ENCODE measurements at regions of chr12 and their contacts with region 1.

Region 1: DNA sequence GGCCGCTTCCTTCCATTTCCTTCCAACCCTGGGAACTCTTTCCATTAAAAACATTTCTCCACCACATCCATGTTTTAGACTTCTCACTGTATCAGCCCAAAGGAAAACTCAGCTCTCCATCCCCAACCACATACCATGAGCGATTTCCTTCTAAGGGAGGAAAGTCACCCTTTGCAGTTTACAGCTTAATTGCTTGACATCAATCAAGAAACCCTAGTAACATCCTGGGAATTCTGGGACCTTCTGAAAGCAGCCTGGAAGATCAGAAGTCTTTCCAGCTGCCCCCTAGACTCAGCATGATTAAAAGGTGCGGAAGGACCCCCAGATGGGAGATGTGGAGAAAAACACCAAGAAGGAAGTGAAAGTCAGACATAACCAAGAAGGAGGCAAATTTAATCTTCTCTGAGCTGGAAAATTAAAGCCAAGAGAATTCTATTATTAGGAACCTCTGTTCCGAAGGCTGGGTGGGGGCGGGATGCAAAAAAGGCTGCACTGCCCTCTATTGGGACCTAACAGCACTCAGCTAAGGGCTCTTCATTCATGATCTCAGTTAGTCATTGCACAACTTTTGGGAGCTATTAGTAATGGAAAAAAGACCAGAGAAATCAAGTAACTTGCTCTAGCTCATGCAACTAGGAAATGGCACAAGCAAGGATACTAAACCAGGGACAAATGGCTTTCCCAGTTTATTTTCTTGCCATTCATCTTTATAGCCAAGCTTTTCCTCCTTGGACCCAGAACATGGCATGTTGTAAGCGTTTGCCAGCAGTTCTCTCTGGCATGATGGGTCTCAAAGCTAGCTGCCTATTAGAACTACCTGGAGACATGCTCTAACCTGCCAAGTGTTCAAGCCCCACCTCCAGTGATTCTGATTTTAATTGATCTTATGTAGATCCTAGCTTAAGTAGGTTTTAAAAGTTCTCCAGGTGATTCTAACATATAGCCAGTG is 73.1 kb upstream of the PLXNC1 start:
- DNase-seq: peak; percentile 79
- H3K4me3 ChIP-seq: no peak overlapping the region
- H3K27ac ChIP-seq: no peak overlapping the region
- H3K4me1 ChIP-seq: peaks cover 4% of the 10 kb centered on the region
- H3K27me3 ChIP-seq: peaks cover 5% of the 10 kb centered on the region
- CTCF ChIP-seq: peak; percentile 81 to 84

Region 2: DNA sequence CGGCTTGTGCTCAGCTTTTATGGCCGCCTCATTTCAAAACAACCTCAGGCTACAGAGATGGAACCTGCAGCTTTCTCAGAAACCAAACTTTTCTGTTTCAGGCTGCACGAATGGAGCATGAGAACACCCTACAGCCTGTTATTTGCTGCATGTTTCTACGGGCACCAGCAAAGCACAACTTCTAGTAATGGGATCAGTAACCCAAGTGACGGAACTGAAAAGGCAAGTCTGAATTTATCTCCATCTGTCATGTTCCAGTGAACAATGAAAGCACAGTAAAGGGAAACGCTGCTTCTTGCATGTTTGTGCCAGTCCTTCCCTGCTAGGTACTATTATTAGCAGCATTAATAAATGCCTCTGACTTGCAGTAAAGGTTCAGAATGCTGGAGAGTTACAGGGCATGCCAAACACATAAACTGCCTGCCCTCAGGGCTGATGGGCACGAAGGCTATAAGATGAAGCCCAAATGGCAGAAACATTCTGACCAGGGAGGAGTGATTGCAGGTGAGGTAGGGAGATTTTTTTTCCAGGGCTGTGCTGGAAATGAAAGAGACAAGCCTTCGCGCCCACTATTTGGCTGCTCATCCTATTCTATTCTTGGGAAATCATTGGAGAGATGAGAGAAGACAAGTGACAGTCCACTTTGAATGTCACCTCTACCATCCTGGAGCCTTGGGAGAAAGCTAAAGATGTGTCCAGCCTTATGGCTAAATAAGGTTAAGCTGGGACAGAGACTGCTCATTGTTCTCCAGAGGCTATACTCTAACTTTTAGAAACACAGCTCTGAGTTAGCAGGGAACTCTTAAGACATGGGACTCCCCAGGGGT is 27.3 kb before region 1 on chr12:
- CTCF ChIA-PET with region 1: interaction called, 11 read pairs
- dilution Hi-C with region 1: no loop called
- in situ Hi-C with region 1: no loop called
- intact Hi-C with region 1: no loop called
- DNase-seq: peak; percentile 86
- H3K4me3 ChIP-seq: peak overlapping the region in 2 of 3 experiments; percentile 4 to 25
- H3K27ac ChIP-seq: peak overlapping the region; percentile 47
- H3K4me1 ChIP-seq: peaks cover 28% of the 10 kb centered on the region
- H3K27me3 ChIP-seq: no peaks in the 10 kb centered on the region
- CTCF ChIP-seq: no peak